ENCODE measurements at regions of chr4 and their contacts with region 1.

Region 1: GRCh38 chr4:37802068-37802666 is 24.3 kb upstream of the PGM2 start:
- H3K4me3 Mint-ChIP-seq: no peak overlapping the region
- H3K27ac Mint-ChIP-seq: no peak overlapping the region
- H3K4me1 Mint-ChIP-seq: peaks cover 32% of the 10 kb centered on the region
- H3K27me3 Mint-ChIP-seq: no peaks in the 10 kb centered on the region

Region 2: GRCh38 chr4:37648096-37648817 is 153.9 kb before region 1 on chr4:
- intact Hi-C with region 1: no loop called
- H3K4me3 Mint-ChIP-seq: no peak overlapping the region
- H3K27ac Mint-ChIP-seq: no peak overlapping the region
- H3K4me1 Mint-ChIP-seq: peaks cover 44% of the 10 kb centered on the region
- H3K27me3 Mint-ChIP-seq: no peaks in the 10 kb centered on the region

Region 3: DNA sequence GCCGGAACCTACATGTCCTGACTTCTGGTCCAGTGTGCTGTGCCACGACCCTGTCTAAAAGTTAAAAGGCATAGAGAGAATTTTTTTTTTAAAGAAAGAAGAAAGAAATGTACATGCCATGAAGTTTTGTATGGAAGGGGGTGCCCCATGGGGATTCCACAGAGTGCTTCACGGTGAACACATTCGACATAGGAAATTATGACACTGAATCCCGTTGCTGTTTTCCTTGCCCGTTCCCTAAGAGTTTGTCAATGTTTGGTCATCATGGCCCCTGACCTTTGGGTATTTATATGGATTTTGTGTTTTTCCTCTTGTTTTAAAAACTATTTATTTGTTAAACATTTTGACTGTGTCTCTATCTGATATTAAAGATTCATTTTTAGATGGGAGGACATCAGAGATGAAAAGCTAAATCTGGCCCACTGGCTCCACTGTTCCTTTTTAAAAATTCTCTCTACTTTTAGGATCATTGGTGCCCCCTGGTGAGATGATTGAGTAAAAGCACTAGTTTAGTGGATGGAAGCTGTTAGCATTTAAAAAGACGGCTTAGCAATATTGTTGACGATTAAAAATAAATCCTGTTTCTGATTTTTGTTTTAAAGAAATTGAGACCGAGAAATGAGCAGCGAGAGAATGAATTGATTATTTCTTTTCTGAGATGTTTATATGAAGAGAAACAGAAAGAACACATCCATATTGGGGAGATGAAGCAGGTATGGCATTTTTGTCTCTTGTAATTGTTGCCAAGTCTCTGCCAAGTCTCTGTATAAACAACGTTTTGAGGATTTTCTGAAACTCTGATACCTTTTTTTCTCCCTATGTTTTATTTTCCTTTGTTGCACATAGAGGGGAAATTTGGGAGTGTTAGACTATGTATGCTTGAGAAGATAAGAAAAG is 233.1 kb after region 1 on chr4:
- intact Hi-C with region 1: loop called (anchors 1 kb)
- H3K4me3 Mint-ChIP-seq: no peak overlapping the region
- H3K27ac Mint-ChIP-seq: no peak overlapping the region
- H3K4me1 Mint-ChIP-seq: peaks cover 2% of the 10 kb centered on the region
- H3K27me3 Mint-ChIP-seq: no peaks in the 10 kb centered on the region

Region 4: GRCh38 chr4:38634047-38634759 is 832.0 kb after region 1 on chr4:
- intact Hi-C with region 1: no loop called
- H3K4me3 Mint-ChIP-seq: no peak overlapping the region
- H3K27ac Mint-ChIP-seq: no peak overlapping the region
- H3K4me1 Mint-ChIP-seq: peaks cover 6% of the 10 kb centered on the region
- H3K27me3 Mint-ChIP-seq: no peaks in the 10 kb centered on the region